Heart right ventricle (tissue), 16 donors: ENCODE measurements at regions of chr7 and their contacts with region 1.

Region 1: GRCh38 chr7:47254081-47255006 is 327.6 kb downstream of the TNS3 start:
- DNase-seq: peak; percentile 73 to 88
- ATAC-seq: peak; percentile 91 to 96 (median 92)
- H3K4me3 ChIP-seq: peak overlapping the region; percentile 32 to 80 (median 67)
- H3K27ac ChIP-seq: peak overlapping the region; percentile 81 to 96 (median 89)
- H3K4me1 ChIP-seq: peaks cover 2 to 17% (median 15%) of the 10 kb centered on the region in 9 donors
- H3K27me3 ChIP-seq: no peaks in the 10 kb centered on the region
- CTCF ChIP-seq: peak; percentile 88 to 100 (median 95)

Region 2: GRCh38 chr7:45890902-45891461 is 1363.4 kb before region 1 on chr7:
- intact Hi-C with region 1: loop called in 2 of 10 experiments (anchors 10 kb)
- DNase-seq: no peak
- ATAC-seq: no peak
- H3K4me3 ChIP-seq: no peak overlapping the region
- H3K27ac ChIP-seq: no peak overlapping the region
- H3K4me1 ChIP-seq: peaks cover 0 to 14% (median 10%) of the 10 kb centered on the region in 9 donors
- H3K27me3 ChIP-seq: peaks cover 7 to 64% (median 48%) of the 10 kb centered on the region in 7 donors
- CTCF ChIP-seq: peak; percentile 34 to 79 (median 69)

Region 3: GRCh38 chr7:47026780-47027361 is 227.5 kb before region 1 on chr7:
- intact Hi-C with region 1: loop called in 1 of 10 experiments (anchors 10 kb)
- DNase-seq: peak; percentile 13 to 58
- ATAC-seq: peak; percentile 43 to 93 (median 62)
- H3K4me3 ChIP-seq: no peak overlapping the region
- H3K27ac ChIP-seq: peak overlapping the region in 1 of 10 donors; percentile 31
- H3K4me1 ChIP-seq: peaks cover 0 to 35% (median 7%) of the 10 kb centered on the region in 9 donors
- H3K27me3 ChIP-seq: no peaks in the 10 kb centered on the region
- CTCF ChIP-seq: no peak